ENCODE measurements at regions of chr1 and their contacts with region 1.

Region 1: DNA sequence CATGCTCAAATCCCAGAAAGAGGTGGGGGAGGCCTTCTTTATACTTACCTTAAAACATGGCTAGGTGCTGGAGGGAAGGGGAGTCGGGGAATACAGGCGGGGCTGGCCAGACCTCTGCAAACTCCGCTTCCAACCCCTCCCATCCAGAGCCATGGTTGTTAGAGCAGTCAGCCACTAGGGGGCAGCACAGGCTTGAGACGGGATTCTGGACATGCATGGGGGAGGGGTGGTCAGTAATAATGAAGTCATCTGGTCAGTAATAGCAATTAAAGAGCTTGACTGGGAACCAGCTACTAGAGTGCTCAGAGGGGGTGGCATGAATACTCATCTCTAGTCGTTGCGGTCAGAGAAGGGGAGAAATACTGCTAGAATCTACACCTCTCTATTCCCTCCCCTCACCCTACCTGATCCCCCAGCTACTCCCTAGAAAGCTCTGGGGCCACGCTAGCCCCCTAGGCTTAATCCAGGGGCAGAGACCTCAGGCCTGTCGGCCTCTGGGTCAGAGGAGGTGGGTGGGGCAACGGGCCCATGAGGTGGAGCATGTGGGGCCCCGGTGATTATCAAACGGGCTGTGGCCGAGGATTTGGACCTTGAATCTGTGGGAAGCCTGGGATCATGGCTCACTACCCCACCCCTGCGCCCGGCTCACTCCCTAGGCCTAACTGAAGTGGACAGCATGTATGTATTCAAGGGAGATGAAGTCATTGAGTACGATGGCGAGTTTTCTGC is 2.9 kb downstream of the CASQ1 start:
- DNase-seq: peak; percentile 84 to 90
- H3K4me3 ChIP-seq: no peak overlapping the region
- H3K27ac ChIP-seq: no peak overlapping the region
- H3K4me1 ChIP-seq: peaks cover 0 to 4% of the 10 kb centered on the region in 2 donors
- H3K27me3 ChIP-seq: no peaks in the 10 kb centered on the region
- CTCF ChIP-seq: peak; percentile 90 to 98 (median 96)
- POLR2A ChIP-seq: no peak

Region 2: GRCh38 chr1:160251687-160252526 is 58.7 kb after region 1 on chr1:
- intact Hi-C with region 1: loop called (anchors 5 kb)
- DNase-seq: peak; percentile 79 to 87
- H3K4me3 ChIP-seq: no peak overlapping the region
- H3K27ac ChIP-seq: peak overlapping the region; percentile 48 to 70 (median 58)
- H3K4me1 ChIP-seq: peaks cover 26 to 40% of the 10 kb centered on the region in 2 donors
- H3K27me3 ChIP-seq: no peaks in the 10 kb centered on the region
- CTCF ChIP-seq: peak; percentile 18 to 94 (median 80)
- POLR2A ChIP-seq: no peak

Region 3: DNA sequence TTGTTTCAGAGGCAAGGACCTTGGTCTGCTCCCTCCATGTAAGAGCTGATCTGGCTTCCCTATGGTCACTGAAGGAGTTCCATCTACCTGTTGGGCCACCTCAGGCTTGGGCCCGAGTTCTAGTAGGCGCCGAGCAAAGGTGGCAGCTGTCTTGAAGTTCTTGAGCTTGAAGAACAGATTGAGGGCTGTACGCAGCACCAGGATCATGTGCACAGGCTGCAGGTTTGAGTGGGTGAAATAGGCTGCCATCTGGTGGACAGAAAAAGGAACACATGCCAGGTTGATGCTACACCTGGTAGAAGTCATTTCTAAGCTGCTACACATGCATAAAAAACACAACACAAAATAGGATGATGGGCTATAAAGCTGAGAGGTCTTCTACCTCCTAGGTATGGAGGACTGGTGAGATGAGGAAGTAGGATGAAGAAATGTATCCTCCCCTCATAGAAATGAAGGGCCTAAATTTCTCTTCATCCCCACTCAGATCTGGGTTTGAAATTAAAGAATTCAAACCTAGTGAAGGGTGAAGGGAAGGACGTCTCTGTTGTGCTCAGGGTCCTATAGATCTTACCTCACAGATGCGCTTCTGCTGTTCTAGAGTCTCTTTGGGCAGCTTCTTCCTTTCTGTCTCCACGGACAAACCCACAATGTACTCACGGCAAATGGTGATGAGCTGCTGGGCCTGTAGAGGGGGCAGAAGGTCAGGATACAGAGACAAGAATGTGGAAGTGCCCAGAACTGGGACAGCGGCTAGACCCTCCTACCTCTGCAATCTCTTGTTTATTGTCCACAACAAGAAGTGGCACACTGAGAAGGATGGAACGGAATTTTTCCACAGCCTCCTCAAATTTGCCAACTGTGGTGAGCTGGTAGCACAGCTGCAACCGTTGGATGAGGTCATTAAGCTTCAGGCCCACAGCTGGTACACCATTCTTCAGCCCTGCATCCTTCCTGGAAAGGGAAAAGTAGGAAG is 98.3 kb after region 1 on chr1:
- intact Hi-C with region 1: loop called (anchors 5 kb)
- DNase-seq: peak; percentile 79
- H3K4me3 ChIP-seq: no peak overlapping the region
- H3K27ac ChIP-seq: peak overlapping the region in 1 of 3 donors; percentile 42
- H3K4me1 ChIP-seq: no peaks in the 10 kb centered on the region
- H3K27me3 ChIP-seq: no peaks in the 10 kb centered on the region
- CTCF ChIP-seq: peak; percentile 49 to 86 (median 84)
- POLR2A ChIP-seq: no peak